IMR-90 (cell line): ENCODE measurements at regions of chr2 and their contacts with region 1.

Region 1: GRCh38 chr2:102020596-102021181 is 28.9 kb downstream of the IL1R2 start:
- DNase-seq: peak; percentile 88
- ATAC-seq: peak; percentile 99
- H3K4me3 ChIP-seq: no peak overlapping the region
- H3K27ac ChIP-seq: peak overlapping the region; percentile 31; the same call in 1 of the 2 replicates
- H3K4me1 ChIP-seq: peaks cover 9% of the 10 kb centered on the region; the same call in 1 of the 2 replicates
- H3K27me3 ChIP-seq: no peaks in the 10 kb centered on the region
- CTCF ChIP-seq: peak; percentile 99
- POLR2A ChIP-seq: peak; percentile 62
- RAD21 ChIP-seq: peak; percentile 99

Region 2: DNA sequence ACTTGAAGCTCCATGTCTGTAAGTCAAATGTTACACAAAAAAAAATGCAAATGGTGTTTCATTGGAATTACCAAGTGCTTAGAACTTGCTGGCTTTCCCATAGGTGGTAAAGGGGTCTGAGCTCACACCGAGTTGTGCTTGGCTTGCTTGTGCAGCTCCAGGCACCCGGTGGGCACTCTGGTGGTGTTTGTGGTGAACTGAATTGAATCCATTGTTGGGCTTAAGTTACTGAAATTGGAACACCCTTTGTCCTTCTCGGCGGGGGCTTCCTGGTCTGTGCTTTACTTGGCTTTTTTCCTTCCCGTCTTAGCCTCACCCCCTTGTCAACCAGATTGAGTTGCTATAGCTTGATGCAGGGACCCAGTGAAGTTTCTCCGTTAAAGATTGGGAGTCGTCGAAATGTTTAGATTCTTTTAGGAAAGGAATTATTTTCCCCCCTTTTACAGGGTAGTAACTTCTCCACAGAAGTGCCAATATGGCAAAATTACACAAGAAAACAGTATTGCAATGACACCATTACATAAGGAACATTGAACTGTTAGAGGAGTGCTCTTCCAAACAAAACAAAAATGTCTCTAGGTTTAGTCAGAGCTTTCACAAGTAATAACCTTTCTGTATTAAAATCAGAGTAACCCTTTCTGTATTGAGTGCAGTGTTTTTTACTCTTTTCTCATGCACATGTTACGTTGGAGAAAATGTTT is 126.9 kb before region 1 on chr2:
- CTCF ChIA-PET with region 1: no interaction called
- POLR2A ChIA-PET with region 1: no interaction called
- dilution Hi-C with region 1: no loop called
- in situ Hi-C with region 1: no loop called
- intact Hi-C with region 1: no loop called
- DNase-seq: no peak
- ATAC-seq: peak; percentile 44; the same call in 1 of the 2 replicates
- H3K4me3 ChIP-seq: no peak overlapping the region
- H3K27ac ChIP-seq: peak overlapping the region; percentile 20; the same call in 1 of the 2 replicates
- H3K4me1 ChIP-seq: peaks cover 2% of the 10 kb centered on the region; the same call in 1 of the 2 replicates
- H3K27me3 ChIP-seq: no peaks in the 10 kb centered on the region
- CTCF ChIP-seq: no peak
- POLR2A ChIP-seq: no peak
- RAD21 ChIP-seq: no peak

Region 3: DNA sequence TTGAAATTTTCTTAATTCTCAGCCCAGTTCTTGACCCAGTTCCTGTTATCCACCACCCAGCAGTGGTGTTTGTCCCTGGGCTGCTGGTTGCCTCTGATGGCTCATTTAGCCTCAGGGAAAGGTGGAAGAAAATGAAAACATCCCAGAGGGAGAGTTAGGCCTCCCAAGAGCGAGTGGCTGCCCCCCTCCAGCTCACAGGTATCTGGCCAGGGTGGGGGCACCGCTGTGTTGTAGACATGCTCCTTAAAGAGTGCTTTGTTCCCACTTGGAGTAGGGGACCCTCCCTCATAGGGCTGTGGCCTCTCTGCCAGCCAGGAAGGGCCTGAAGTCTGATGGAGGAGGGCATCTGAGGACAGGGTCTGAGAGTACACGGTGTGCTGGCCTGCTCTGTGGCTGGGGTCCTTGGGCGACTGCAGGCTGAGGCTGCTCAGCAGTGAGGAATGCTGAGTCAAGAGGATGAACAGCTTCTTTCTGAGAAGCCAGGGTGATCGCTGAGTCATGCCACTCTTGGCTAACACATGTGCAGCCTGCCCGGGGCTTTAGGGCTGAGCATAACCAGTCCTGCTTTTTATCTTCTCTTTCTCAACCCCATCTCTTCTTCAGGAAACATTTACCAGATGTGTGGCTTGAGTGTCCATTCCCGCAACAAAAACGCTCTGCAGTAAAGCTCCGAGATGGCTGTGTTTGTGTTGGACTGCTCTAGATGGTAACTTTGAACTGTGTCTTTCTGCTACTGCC is 43.4 kb after region 1 on chr2:
- CTCF ChIA-PET with region 1: interaction called, 7 read pairs
- POLR2A ChIA-PET with region 1: no interaction called
- dilution Hi-C with region 1: no loop called
- in situ Hi-C with region 1: no loop called
- intact Hi-C with region 1: loop called (anchors 1 kb)
- DNase-seq: peak; percentile 99
- ATAC-seq: peak; percentile 89
- H3K4me3 ChIP-seq: peak overlapping the region; percentile 14; the same call in 1 of the 2 replicates
- H3K27ac ChIP-seq: peak overlapping the region; percentile 98
- H3K4me1 ChIP-seq: peaks cover 29% of the 10 kb centered on the region
- H3K27me3 ChIP-seq: no peaks in the 10 kb centered on the region
- CTCF ChIP-seq: no peak
- POLR2A ChIP-seq: peak; percentile 47; the same call in 1 of the 2 replicates
- RAD21 ChIP-seq: peak; percentile 29; the same call in 1 of the 2 replicates

Region 4: DNA sequence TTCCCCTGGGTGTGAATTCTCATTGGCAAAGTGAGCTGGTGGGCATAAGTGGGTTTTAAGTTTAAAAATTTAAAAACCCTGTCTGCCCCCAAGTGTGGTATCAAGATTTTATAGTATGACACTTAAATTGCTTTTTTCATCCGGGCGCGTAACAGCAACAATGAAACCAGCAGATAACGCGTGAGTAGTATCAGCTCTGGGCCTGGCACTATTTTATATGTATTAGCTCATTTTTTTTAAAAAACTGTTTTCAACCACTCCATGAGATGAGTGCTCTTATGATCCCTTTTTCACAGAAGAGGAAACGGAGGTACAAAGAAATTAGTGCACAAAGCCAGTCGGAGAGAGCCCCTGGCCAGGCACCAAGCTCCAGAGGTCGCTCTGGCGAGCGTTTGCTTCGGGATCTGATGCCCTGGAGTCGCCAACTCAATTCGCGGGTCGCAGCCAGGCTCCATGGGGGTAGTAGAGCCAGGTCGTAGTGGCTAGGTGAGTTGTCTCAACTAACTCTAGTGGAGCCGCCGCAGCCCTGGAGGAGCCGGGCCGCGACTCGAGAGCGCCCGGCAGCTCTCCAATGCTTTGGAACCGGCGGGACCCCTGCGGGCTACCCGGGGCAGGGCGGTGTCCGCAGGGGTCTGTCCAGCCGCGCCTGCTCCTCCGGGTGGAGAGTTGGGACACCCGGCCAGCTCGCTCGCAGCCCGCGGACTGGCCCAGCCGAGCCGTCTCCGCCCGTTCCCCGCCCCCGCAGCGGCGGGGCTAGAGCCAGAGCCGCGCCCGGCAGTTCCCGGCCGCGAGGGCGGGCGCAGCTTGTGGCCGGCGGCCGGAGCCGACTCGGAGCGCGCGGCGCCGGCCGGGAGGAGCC is 121.5 kb after region 1 on chr2 and contains the start of gene IL1R1:
- CTCF ChIA-PET with region 1: interaction called, 10 read pairs
- POLR2A ChIA-PET with region 1: no interaction called
- dilution Hi-C with region 1: no loop called
- in situ Hi-C with region 1: loop called (anchors 10 kb)
- intact Hi-C with region 1: loop called (anchors 5 kb)
- DNase-seq: peak; percentile 80
- ATAC-seq: peak; percentile 91
- H3K4me3 ChIP-seq: peak within 1 kb of the TSS; percentile 89
- H3K27ac ChIP-seq: peak within 1 kb of the TSS; percentile 93
- H3K4me1 ChIP-seq: peaks cover 18% of the 10 kb centered on the region
- H3K27me3 ChIP-seq: no peaks in the 10 kb centered on the region
- CTCF ChIP-seq: no peak
- POLR2A ChIP-seq: peak; percentile 83
- RAD21 ChIP-seq: no peak
- total RNA-seq, gene IL1R1: 6.5 and 8.1 TPM in 2 replicates

Region 5: DNA sequence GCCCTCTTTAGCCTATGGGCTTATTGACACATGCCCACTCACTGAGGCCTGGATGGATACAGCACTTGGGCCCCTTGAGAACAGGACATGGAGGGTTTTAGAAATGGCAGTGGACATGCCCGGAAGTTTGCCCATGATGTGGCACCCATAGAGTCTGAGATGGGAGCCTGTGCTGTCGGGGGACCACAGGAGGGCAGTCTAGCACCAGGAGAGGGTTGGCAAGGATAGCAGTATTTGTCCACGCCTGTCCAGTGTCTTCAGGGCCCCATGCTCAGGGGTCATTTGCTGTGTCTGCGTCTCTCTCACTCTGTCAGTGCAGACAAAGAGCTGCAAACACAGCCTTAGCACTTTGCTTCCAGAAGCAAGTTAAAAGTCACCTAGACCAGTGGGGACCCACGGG is 214.8 kb after region 1 on chr2:
- CTCF ChIA-PET with region 1: interaction called, 26 read pairs
- POLR2A ChIA-PET with region 1: no interaction called
- dilution Hi-C with region 1: no loop called
- in situ Hi-C with region 1: loop called (anchors 5 kb)
- intact Hi-C with region 1: loop called (anchors 1 kb)
- DNase-seq: peak; percentile 29
- ATAC-seq: peak; percentile 62
- H3K4me3 ChIP-seq: no peak overlapping the region
- H3K27ac ChIP-seq: no peak overlapping the region
- H3K4me1 ChIP-seq: peaks cover 7% of the 10 kb centered on the region
- H3K27me3 ChIP-seq: no peaks in the 10 kb centered on the region
- CTCF ChIP-seq: peak; percentile 55
- POLR2A ChIP-seq: no peak
- RAD21 ChIP-seq: peak; percentile 72

Region 6: DNA sequence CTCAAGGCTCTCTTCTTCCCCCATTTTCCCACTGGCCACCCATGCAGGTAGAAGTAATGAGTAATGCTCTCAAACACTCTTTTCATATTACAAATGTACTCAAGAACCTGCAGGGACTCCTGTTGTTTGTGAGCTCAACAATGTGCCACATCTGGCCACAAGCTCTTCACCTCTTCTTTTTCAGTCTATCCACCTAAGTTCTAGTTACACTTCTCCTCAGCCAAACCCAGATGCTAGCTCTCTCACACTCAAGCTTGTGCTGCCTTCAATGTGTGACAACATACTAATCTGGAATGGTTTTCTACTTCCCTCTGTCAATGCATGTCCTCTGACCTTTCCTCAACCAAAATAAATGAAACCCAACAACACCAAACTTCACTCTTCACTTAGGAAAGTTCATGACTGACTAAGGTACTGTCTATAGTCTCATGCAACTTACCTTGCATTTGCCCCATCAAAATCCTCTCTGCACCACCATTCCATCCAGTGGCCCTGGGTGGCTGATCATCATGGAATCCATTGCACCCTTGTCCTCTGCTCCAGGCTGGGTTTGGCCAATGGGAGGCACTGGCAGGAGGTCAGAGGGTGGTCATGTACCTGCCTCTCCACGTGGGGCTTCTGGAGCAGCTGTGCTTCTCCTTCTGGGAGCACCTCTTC is 329.6 kb after region 1 on chr2:
- CTCF ChIA-PET with region 1: no interaction called
- POLR2A ChIA-PET with region 1: no interaction called
- dilution Hi-C with region 1: no loop called
- in situ Hi-C with region 1: loop called (anchors 5 kb)
- intact Hi-C with region 1: loop called (anchors 5 kb)
- DNase-seq: no peak
- ATAC-seq: no peak
- H3K4me3 ChIP-seq: no peak overlapping the region
- H3K27ac ChIP-seq: no peak overlapping the region
- H3K4me1 ChIP-seq: peaks cover 2% of the 10 kb centered on the region; the same call in 1 of the 2 replicates
- H3K27me3 ChIP-seq: peaks cover 15% of the 10 kb centered on the region
- CTCF ChIP-seq: no peak
- POLR2A ChIP-seq: no peak
- RAD21 ChIP-seq: no peak

Region 7: GRCh38 chr2:102442967-102443828 is 422.5 kb after region 1 on chr2:
- CTCF ChIA-PET with region 1: no interaction called
- POLR2A ChIA-PET with region 1: no interaction called
- dilution Hi-C with region 1: no loop called
- in situ Hi-C with region 1: loop called (anchors 5 kb)
- intact Hi-C with region 1: loop called (anchors 2 kb)
- DNase-seq: peak; percentile 39
- ATAC-seq: peak; percentile 83
- H3K4me3 ChIP-seq: no peak overlapping the region
- H3K27ac ChIP-seq: no peak overlapping the region
- H3K4me1 ChIP-seq: 0 out of 2 replicates have a peak, but pooled peaks cover 2% of the 10 kb centered on the region
- H3K27me3 ChIP-seq: peaks cover 3% of the 10 kb centered on the region; the same call in 1 of the 2 replicates
- CTCF ChIP-seq: peak; percentile 77
- POLR2A ChIP-seq: no peak
- RAD21 ChIP-seq: peak; percentile 78